A549 (cell line): ENCODE measurements at regions of chr16 and their contacts with region 1.

Region 1: DNA sequence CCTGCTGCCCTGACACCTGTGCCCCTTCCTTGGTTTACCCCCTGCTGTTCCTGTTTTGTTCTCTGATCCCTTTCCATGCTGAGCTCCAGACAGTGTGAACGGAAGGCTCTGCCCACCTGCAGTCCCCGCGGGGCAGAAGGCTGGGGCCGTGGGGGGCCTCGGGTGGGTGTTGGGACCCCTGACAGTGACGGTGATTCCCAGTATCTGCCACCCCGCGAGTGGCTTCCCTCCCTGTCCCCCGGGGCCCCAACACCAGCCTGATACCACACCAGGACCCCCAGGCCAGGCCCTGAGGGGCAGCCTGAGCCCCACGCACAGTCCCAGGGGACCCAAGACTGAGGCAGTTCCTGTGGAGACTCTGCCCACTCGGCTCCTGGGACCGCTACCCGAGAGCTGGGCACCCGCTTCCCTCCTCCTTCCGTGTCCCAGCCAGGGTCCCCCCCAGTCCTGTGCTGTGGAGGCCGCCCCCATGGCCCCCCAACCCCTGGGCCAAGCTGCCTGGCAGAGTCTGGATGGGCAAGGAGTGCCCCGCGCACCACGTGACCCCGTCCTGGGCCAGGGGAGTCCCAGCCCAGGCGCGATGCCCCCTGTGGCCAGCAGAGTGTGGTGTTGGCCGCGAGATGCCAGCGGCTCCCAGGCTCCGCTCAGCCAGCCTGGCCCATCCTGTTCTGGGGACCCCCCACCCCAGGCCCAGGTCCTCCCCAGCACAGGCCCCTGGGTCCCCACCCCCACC is 10.0 kb upstream of the C1QTNF8 start:
- DNase-seq: peak; percentile 71 to 94
- ATAC-seq: peak; percentile 59 to 86
- H3K4me3 ChIP-seq: no peak overlapping the region
- H3K27ac ChIP-seq: peak overlapping the region; percentile 23 to 54; a peak in 3 of 6 replicates
- H3K4me1 ChIP-seq: peaks cover 22% of the 10 kb centered on the region
- CTCF ChIP-seq: peak; percentile 93
- EP300 ChIP-seq: no peak
- POLR2A ChIP-seq: no peak
- RAD21 ChIP-seq: peak; percentile 94 to 100

Region 2: GRCh38 chr16:819336-820043 is 286.6 kb before region 1 on chr16:
- CTCF ChIA-PET with region 1: interaction called, 10 read pairs
- POLR2A ChIA-PET with region 1: no interaction called
- DNase-seq: no peak
- ATAC-seq: no peak; a peak in 1 of 6 replicates
- H3K4me3 ChIP-seq: no peak overlapping the region
- H3K27ac ChIP-seq: no peak overlapping the region
- H3K4me1 ChIP-seq: peaks cover 6% of the 10 kb centered on the region; the same call in 1 of the 3 replicates
- CTCF ChIP-seq: no peak
- EP300 ChIP-seq: no peak
- POLR2A ChIP-seq: no peak
- RAD21 ChIP-seq: no peak

Region 3: GRCh38 chr16:1014771-1015495 is 91.1 kb before region 1 on chr16:
- CTCF ChIA-PET with region 1: no interaction called
- POLR2A ChIA-PET with region 1: no interaction called
- DNase-seq: no peak
- ATAC-seq: no peak
- H3K4me3 ChIP-seq: no peak overlapping the region
- H3K27ac ChIP-seq: no peak overlapping the region
- H3K4me1 ChIP-seq: no peaks in the 10 kb centered on the region
- CTCF ChIP-seq: no peak
- EP300 ChIP-seq: no peak
- POLR2A ChIP-seq: no peak
- RAD21 ChIP-seq: no peak

Region 4: DNA sequence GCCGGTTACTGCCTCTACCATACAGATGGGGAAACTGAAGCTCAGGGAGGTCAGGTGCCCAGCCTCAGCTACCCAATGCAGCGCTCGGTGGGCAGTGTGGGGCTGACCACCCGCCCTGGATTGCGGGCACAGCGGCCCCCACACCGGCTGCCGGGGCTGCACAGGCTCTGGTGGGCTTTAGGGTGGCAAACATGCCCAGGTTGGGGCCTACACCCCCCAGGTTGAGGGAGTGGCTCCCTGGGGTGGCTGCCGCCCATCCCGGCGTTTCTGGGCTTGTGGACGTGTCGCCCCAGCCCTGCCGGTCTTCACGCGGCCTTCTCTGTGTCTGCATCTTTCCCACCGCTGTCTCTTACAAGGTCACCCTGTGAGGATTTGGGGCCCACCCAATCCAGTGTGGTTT is 74.4 kb before region 1 on chr16:
- CTCF ChIA-PET with region 1: no interaction called
- POLR2A ChIA-PET with region 1: no interaction called
- DNase-seq: no peak
- ATAC-seq: no peak
- H3K4me3 ChIP-seq: no peak overlapping the region
- H3K27ac ChIP-seq: no peak overlapping the region
- H3K4me1 ChIP-seq: peaks cover 3% of the 10 kb centered on the region; the same call in 2 of the 3 replicates
- CTCF ChIP-seq: no peak
- EP300 ChIP-seq: no peak
- POLR2A ChIP-seq: no peak
- RAD21 ChIP-seq: no peak

Region 5: GRCh38 chr16:1069154-1069553 is 36.9 kb before region 1 on chr16:
- CTCF ChIA-PET with region 1: interaction called, 12 read pairs
- POLR2A ChIA-PET with region 1: no interaction called
- DNase-seq: no peak
- ATAC-seq: peak in 1 of 2 experiments; percentile 63; a peak in 3 of 6 replicates
- H3K4me3 ChIP-seq: no peak overlapping the region
- H3K27ac ChIP-seq: no peak overlapping the region
- H3K4me1 ChIP-seq: peaks cover 17% of the 10 kb centered on the region; the same call in 2 of the 3 replicates
- CTCF ChIP-seq: no peak
- EP300 ChIP-seq: no peak
- POLR2A ChIP-seq: no peak
- RAD21 ChIP-seq: no peak

Region 6: GRCh38 chr16:1182316-1182671 is 76.2 kb after region 1 on chr16:
- CTCF ChIA-PET with region 1: interaction called, 15 read pairs
- POLR2A ChIA-PET with region 1: no interaction called
- DNase-seq: peak; percentile 57 to 83
- ATAC-seq: peak; percentile 58 to 79
- H3K4me3 ChIP-seq: peak overlapping the region; percentile 36; the same call in 2 of the 3 replicates
- H3K27ac ChIP-seq: peak overlapping the region; percentile 97 to 100
- H3K4me1 ChIP-seq: peaks cover 49% of the 10 kb centered on the region
- CTCF ChIP-seq: no peak
- EP300 ChIP-seq: peak; percentile 13 to 33; a peak in 2 of 5 replicates
- POLR2A ChIP-seq: no peak
- RAD21 ChIP-seq: peak in 1 of 2 experiments; percentile 21; a peak in 1 of 5 replicates

Region 7: GRCh38 chr16:1208239-1208830 is 102.3 kb after region 1 on chr16:
- CTCF ChIA-PET with region 1: interaction called, 26 read pairs
- POLR2A ChIA-PET with region 1: no interaction called
- DNase-seq: no peak
- ATAC-seq: peak in 1 of 2 experiments; percentile 8; a peak in 2 of 6 replicates
- H3K4me3 ChIP-seq: no peak overlapping the region
- H3K27ac ChIP-seq: no peak overlapping the region
- H3K4me1 ChIP-seq: no peaks in the 10 kb centered on the region
- CTCF ChIP-seq: no peak
- EP300 ChIP-seq: no peak
- POLR2A ChIP-seq: no peak
- RAD21 ChIP-seq: no peak